ENCODE measurements at regions of chr14 and their contacts with region 1.

Region 1: DNA sequence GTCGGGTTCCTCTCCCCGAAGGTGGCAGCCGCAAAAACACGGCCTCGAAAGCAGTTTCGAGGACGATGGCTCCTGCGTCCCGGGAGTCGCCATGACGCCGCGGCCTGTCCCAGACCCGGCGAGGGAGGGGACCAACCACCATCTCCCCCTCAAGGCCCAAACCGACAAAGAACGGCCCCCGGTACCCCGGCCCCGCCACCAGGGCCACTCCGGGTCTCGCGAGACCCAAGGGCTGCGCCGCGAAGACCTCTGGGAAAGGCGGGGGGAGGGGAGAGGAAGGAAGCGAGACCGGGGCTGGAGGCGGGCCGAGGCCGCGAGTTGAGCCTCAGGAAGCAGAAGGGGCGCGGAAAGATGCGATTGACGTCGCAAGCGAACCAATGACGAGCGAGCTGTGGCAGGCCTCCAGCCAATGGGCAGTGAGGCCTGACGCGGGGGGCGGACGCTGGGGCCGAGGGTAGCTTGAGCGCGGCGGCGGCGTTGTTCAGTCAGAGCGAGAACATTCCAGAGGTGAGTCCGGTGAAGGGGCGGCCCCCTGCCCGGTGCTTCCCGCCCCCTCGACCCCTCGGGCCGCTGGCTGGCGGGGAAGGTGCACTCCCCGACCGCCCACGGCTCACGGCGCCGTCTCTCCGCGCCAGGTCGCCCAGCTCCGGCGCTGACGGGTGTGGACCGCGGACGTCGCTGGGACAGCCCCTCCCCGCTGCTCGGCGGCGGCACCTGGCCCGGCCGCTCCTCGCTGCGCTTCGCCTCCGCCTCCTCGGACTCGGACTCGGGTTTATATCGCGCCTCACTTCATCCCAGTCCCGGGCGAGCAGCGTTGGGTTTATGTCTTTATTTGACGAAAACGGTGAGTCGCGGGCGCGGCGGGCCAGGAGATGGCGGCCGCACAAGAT is at the start of gene EIF5:
- DNase-seq: peak; percentile 99
- H3K4me3 Mint-ChIP-seq: peak within 1 kb of the TSS; percentile 85
- H3K27ac Mint-ChIP-seq: peak within 1 kb of the TSS; percentile 95
- H3K4me1 Mint-ChIP-seq: peaks cover 51% of the 10 kb centered on the region
- H3K27me3 Mint-ChIP-seq: no peaks in the 10 kb centered on the region
- total RNA-seq, gene EIF5: 117 to 121 TPM

Region 2: DNA sequence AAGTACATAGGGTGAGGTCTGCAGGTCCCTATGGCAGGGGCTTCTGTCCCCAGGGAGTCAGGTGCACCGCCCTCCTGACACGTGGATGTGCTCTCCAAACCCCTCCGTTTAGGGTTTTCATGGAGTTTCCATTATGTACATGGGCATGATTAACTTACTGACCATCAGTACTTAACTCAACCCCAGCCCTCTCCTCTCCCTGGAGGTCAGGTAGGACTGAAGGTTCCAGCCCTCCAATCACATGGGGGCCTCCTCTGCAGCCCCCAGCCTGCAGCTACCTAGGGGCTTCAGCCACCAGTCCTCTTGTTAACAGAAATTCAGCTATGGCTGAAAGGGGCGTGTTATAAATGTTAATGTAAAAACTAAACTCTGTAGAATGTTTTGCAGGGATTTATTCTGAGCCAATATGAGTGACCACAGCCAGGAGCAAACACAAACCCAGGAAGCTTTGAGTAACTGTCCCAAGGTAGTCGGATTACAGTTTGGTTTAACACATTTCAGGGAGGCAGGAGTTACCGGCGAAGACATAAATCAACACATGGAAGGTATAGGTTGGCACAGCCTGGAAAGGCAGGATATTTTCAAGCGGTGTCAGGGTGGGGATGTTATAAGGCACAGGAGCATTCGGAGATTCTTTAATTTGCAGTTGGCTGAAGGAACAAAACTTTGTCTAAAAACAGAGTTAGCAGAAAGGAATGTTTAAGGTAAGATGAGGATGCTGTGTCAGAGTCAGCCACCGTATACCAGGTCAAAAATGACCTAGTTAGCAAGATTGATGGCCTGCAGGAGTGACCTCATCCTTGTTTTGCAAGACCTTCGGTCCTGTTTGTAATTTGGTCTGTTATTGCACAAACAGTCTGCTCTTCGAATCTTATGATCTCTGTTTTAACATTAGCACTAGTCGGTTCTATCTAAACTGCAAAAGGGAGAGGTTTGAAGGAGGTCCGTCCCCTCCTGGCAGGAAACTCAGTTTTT is 135.6 kb before region 1 on chr14:
- CTCF ChIA-PET with region 1: no interaction called
- intact Hi-C with region 1: no loop called
- DNase-seq: no peak
- H3K4me3 Mint-ChIP-seq: no peak overlapping the region
- H3K27ac Mint-ChIP-seq: no peak overlapping the region
- H3K4me1 Mint-ChIP-seq: no peaks in the 10 kb centered on the region
- H3K27me3 Mint-ChIP-seq: peaks cover 9% of the 10 kb centered on the region

Region 3: DNA sequence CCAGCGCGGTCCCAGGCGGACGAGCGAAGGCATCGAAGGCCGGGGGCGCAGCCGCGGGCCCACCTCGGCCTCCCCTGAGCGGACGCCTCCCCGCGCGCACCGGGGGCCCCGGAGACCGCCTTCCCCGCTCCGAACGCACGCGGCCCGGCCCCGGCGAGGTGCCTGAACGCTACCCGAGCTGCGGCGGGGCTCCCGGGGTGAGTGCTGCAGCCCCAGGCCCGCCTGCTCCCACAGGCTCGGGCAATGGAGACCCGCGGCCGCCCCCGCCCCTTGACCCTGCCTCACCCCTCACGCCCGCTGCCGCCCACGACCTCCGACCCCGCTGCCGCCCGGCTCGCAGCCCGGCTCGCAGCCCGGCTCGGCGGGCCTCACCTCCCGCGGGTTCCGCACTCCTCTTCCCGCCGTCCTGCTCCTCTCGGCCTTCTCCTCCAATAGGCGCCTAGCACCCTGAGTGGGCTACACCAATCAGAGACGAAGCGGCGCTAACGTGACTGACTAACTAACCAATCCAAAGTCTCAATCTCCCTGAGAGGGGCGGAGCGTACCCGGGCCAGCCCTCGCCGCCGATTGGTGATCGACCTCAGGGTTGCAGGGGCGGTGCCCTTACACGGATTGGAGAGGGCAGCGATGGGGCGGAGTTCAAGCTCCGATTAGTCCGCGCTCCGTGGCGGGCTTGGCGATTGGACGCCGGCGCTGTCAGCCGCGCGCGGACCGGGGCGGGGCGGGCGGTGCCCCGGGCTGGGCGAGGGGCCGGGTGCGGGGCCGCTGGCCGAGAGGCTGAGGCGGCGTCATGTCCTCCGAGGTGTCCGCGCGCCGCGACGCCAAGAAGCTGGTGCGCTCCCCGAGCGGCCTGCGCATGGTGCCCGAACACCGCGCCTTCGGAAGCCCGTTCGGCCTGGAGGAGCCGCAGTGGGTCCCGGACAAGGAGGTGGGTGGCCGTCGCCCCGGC is 381.3 kb after region 1 on chr14 and contains the starts of genes XRCC3 and ZFYVE21:
- CTCF ChIA-PET with region 1: no interaction called
- intact Hi-C with region 1: loop called (anchors 2 kb)
- DNase-seq: peak; percentile 100
- H3K4me3 Mint-ChIP-seq: peak within 1 kb of the TSS; percentile 93
- H3K27ac Mint-ChIP-seq: peak within 1 kb of the TSS; percentile 86
- H3K4me1 Mint-ChIP-seq: peaks cover 45% of the 10 kb centered on the region
- H3K27me3 Mint-ChIP-seq: no peaks in the 10 kb centered on the region
- total RNA-seq, gene XRCC3: 49.0 to 50.4 TPM
- total RNA-seq, gene ZFYVE21: 9.1 to 10.4 TPM